Gastrocnemius medialis (tissue), 4 donors: ENCODE measurements at regions of chr6 and their contacts with region 1.

Region 1: GRCh38 chr6:26401987-26402658 is at the start of gene BTN3A1:
- DNase-seq: peak in 1 of 2 donors; percentile 37
- ATAC-seq: peak; percentile 99 to 100
- H3K4me3 ChIP-seq: peak within 1 kb of the TSS; percentile 54 to 65 (median 62)
- H3K27ac ChIP-seq: peak within 1 kb of the TSS; percentile 73 to 84 (median 80)
- H3K4me1 ChIP-seq: peaks cover 6 to 14% of the 10 kb centered on the region in 2 donors
- H3K27me3 ChIP-seq: no peaks in the 10 kb centered on the region
- CTCF ChIP-seq: no peak
- POLR2A ChIP-seq: no peak
- total RNA-seq, gene BTN3A1: 2.5 to 3.5 (median 3.1) TPM

Region 2: GRCh38 chr6:26342106-26343004 is 59.8 kb before region 1 on chr6:
- in situ Hi-C with region 1: no loop called
- intact Hi-C with region 1: no loop called
- DNase-seq: no peak
- ATAC-seq: no peak
- H3K4me3 ChIP-seq: no peak overlapping the region
- H3K27ac ChIP-seq: no peak overlapping the region
- H3K4me1 ChIP-seq: no peaks in the 10 kb centered on the region
- H3K27me3 ChIP-seq: peaks cover 4 to 16% (median 8%) of the 10 kb centered on the region in 3 donors
- CTCF ChIP-seq: no peak
- POLR2A ChIP-seq: no peak

Region 3: GRCh38 chr6:26383624-26384417 is 18.3 kb before region 1 on chr6:
- in situ Hi-C with region 1: no loop called
- intact Hi-C with region 1: loop called (anchors 1 kb)
- DNase-seq: no peak
- ATAC-seq: peak in 1 of 2 donors; percentile 37
- H3K4me3 ChIP-seq: peak overlapping the region; percentile 63 to 79 (median 72)
- H3K27ac ChIP-seq: peak overlapping the region; percentile 70 to 77 (median 74)
- H3K4me1 ChIP-seq: no peaks in the 10 kb centered on the region
- H3K27me3 ChIP-seq: no peaks in the 10 kb centered on the region
- CTCF ChIP-seq: no peak
- POLR2A ChIP-seq: no peak

Region 4: DNA sequence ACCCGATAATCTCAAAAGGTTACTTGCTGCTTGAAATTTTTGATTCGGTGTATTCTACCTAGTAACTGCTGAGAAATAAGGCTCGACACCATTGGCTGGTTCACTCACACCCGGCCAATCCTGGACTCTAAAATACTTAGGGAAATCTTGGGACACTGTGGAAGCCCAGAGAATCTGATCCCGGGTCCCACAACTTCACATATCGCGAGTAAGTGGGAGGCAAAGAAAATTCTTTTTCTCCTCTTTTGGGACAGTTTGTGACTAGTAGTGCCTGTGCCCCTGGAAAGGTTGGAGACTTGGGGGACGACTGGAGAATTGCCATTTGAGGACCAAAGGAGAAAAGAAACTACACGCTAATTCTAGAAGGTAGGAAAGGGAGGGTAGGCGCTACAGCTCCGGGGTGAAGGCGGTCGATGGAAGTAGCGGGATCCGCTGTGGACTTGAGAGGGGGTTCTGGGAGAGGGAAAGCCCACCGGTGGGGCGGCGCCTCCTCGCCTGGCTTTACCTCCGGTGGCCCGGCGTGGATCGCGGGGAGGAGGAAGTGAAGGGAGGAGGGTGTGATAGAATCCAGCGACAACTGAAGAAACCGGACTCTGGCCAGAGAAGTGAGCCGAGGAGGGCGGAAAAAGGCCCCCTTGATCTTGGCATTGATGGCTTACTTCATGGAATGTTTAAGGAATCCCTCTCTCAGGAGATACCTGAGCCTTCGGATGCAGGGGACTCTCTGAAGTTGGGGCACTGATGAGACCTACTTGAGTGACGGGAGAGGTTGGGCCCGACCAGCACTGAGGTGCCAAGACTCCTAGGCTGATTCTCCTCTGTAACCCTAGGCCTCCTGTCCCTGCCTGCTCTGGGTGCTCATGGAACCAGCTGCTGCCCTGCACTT is 19.4 kb after region 1 on chr6:
- in situ Hi-C with region 1: no loop called
- intact Hi-C with region 1: loop called (anchors 1 kb)
- DNase-seq: peak; percentile 58 to 69
- ATAC-seq: peak; percentile 100
- H3K4me3 ChIP-seq: peak overlapping the region; percentile 84 to 95 (median 91)
- H3K27ac ChIP-seq: peak overlapping the region; percentile 86 to 90 (median 87)
- H3K4me1 ChIP-seq: peaks cover 8 to 22% of the 10 kb centered on the region in 2 donors
- H3K27me3 ChIP-seq: no peaks in the 10 kb centered on the region
- CTCF ChIP-seq: no peak
- POLR2A ChIP-seq: peak in 1 of 2 donors; percentile 60

Region 5: DNA sequence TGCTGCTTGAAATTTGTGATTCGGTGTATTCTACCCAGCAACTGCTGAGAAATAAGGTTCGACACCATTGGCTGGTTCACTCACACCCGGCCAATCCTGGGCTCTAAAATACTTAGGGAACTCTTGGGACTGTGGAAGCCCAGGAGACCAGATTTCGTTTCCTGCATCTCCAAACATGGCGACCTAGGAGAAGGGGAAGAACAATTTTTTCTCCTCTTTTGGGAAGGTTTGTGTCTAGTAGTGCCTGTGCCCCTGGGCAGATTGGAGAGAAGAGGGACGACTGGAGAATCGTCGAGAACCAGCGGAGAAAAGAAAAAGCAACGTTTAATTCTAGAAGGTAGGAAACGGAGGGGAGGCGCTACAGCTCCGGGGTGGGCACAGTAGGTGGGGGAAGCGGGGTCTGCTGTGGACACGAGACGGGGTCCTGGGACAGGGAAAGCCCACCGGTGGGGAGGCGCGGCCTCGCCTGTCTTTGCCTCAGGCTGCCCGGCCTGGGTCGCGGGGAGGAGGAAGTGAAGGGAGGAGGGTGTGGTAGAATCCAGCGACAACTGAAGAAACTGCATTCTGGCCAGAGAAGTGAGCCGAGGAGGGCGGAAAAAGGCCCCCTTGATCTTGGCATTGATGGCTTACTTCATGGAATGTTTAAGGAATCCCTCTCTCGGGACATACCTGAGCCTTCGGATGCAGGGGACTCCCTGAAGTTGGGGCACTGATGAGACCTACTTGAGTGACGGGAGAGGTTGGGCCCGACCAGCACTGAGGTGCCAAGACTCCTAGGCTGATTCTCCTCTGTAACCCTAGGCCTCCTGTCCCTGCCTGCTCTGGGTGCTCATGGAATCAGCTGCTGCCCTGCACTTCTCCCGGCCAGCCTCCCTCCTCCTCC is 55.9 kb after region 1 on chr6 and contains the start of gene BTN2A1:
- in situ Hi-C with region 1: no loop called
- intact Hi-C with region 1: loop called (anchors 1 kb)
- DNase-seq: peak; percentile 82
- ATAC-seq: peak; percentile 99 to 100
- H3K4me3 ChIP-seq: peak within 1 kb of the TSS; percentile 74 to 94 (median 86)
- H3K27ac ChIP-seq: peak within 1 kb of the TSS; percentile 93 to 97 (median 94)
- H3K4me1 ChIP-seq: peaks cover 28 to 37% of the 10 kb centered on the region in 2 donors
- H3K27me3 ChIP-seq: no peaks in the 10 kb centered on the region
- CTCF ChIP-seq: no peak
- POLR2A ChIP-seq: peak in 1 of 2 donors; percentile 34
- total RNA-seq, gene BTN2A1: 6.2 to 9.7 (median 8.1) TPM

Region 6: DNA sequence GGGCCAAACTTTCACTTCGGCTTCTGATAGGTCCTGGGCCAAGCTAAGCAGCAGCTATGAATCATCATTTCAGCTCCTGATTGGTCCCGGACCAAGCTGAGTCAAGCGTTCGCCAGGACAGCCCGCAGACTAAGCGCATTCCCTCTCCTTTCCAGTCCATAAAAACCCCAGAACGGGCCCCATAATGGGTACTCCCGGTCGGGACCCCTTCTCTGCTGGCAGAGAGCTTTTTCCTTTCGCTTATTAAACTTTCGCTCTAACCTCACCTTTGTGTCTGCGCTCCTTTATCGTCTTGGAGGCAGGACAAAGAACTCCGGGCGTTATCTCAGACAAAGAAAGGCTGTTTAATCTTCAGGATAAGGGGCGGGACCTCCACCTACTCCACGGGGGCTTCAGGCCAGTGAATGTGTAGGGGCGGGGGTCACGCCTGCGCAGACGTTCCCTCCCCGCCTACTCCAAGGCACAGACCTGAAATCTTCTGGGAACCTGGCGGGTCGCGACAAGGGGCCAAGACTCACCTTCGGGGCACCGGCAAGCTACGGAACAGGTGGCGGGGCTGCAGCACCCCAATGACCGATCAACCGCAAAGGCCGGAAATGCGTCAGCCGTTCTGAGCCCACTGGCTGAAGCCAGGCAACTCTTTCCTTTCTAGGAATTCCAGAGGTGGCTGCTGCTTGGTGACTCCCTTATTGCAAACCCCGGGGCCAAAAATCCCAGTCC is 1933.6 kb after region 1 on chr6 and contains the start of gene ZSCAN31:
- in situ Hi-C with region 1: no loop called
- intact Hi-C with region 1: no loop called
- DNase-seq: peak; percentile 90 to 94
- ATAC-seq: peak; percentile 98 to 99
- H3K4me3 ChIP-seq: peak within 1 kb of the TSS; percentile 78 to 91 (median 84)
- H3K27ac ChIP-seq: peak within 1 kb of the TSS; percentile 90 to 99 (median 97)
- H3K4me1 ChIP-seq: peaks cover 11 to 13% of the 10 kb centered on the region in 2 donors
- H3K27me3 ChIP-seq: no peaks in the 10 kb centered on the region
- CTCF ChIP-seq: no peak
- POLR2A ChIP-seq: peak; percentile 64 to 78
- total RNA-seq, gene ZSCAN31: 2.4 to 14.1 (median 7.5) TPM